Heart left ventricle (tissue), 16 donors: ENCODE measurements at regions of chr1 and their contacts with region 1.

Region 1: DNA sequence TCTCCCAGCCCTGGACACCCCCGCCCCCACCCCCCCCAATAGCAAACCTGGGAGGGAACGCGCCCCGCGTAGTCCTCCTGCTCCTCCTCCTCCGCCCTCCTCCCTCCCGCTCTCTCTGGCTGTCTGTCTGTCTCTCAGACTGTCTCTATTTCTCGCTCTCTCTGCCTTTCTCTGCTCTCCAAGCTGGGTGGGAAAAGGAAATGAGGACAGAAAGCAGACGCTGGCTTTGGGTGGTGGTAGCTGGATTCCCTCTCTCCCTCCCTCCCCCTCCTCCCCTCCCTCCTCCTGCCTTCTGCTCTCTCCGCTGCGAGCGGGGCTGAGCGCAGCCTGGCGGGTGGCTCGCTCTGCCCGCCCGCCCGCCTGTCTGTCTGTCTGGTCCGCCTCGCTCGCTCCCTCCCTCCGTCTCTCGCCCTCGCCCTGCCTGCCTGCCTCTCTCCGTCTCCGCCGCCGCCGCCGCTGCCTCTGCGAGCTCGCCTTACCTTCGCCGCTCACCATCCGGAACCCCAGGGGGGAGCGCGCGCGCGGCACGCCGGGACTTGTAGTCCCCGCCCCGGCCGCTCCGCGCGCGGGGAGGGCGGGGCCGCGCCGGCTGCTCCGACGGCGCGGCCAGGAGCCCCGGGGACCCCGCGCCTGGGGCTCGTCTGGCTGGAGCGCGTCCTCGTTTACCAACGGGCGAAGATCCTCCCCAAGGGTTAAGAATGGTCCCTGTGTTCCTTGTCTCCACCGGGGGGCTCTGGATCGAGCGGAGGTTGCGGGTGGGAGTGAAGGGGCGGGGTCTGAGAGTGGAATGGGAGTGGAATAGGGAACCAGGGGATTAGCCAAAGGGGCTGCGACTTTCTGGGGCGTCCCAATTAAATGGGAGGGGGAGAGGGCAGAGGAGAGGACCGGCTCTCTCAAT is at the start of gene AHDC1:
- DNase-seq: peak; percentile 93 to 96 (median 94)
- ATAC-seq: peak; percentile 25 to 75 (median 68)
- H3K4me3 ChIP-seq: peak within 1 kb of the TSS; percentile 82 to 100 (median 96)
- H3K27ac ChIP-seq: peak within 1 kb of the TSS; percentile 83 to 99 (median 98)
- H3K4me1 ChIP-seq: peaks cover 12 to 69% (median 44%) of the 10 kb centered on the region in 12 donors
- H3K27me3 ChIP-seq: no peaks in the 10 kb centered on the region
- CTCF ChIP-seq: peak in 5 of 12 donors; percentile 5 to 47 (median 25)
- POLR2A ChIP-seq: peak in 1 of 2 donors; percentile 92
- total RNA-seq, gene AHDC1: 29.2 to 50.2 (median 42.1) TPM

Region 2: DNA sequence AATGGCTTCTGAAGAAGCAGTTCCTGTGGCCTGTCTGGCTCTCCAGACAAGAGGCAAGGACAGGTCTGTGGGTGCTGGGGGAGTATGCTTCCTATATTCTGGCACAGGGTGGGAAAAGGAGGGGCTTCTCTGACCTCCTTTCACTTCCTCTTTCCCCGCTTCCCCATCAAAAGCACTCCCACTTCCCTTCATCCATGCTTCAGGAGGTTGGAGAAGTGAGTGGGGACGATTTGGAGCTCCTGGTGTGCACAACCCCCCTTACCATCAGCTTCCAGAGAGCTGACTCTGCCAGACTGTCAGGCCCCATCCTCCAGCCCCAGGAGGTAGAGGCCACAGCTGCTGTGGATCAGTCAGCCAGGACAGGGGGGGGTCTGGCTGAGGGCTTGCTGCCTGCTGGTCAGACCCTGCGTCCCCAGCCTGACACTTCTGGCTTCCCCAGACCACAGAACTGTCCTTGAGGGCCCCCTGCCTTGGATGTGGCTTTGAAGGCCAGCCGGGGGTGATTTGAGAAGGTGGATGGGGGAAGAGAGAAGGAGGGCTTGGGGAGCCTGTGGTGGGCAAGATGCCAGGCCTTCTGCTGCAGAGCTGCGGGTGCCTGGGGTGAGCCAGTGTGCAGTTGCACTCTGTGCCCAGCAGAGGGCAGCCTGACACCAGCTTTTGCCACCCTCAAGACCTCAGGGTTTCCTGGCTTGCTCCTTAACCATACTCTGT is 303.4 kb before region 1 on chr1:
- intact Hi-C with region 1: loop called in 9 of 10 experiments (anchors 2 to 5 kb)
- DNase-seq: peak; percentile 75 to 92 (median 83)
- ATAC-seq: peak; percentile 77 to 87 (median 85)
- H3K4me3 ChIP-seq: no peak overlapping the region
- H3K27ac ChIP-seq: peak overlapping the region; percentile 48 to 94 (median 79)
- H3K4me1 ChIP-seq: peaks cover 3 to 44% (median 31%) of the 10 kb centered on the region in 12 donors
- H3K27me3 ChIP-seq: no peaks in the 10 kb centered on the region
- CTCF ChIP-seq: peak; percentile 92 to 100 (median 98)
- POLR2A ChIP-seq: no peak

Region 3: GRCh38 chr1:27402349-27402754 is 201.6 kb before region 1 on chr1:
- intact Hi-C with region 1: loop called (anchors 2 to 10 kb)
- DNase-seq: peak; percentile 68 to 87 (median 83)
- ATAC-seq: peak; percentile 38 to 57 (median 42)
- H3K4me3 ChIP-seq: no peak overlapping the region
- H3K27ac ChIP-seq: peak overlapping the region; percentile 76 to 87 (median 85)
- H3K4me1 ChIP-seq: peaks cover 27 to 96% (median 80%) of the 10 kb centered on the region in 12 donors
- H3K27me3 ChIP-seq: no peaks in the 10 kb centered on the region
- CTCF ChIP-seq: peak; percentile 42 to 70 (median 60)
- POLR2A ChIP-seq: no peak

Region 4: GRCh38 chr1:27430903-27431600 is 172.9 kb before region 1 on chr1:
- intact Hi-C with region 1: loop called in 3 of 10 experiments (anchors 2 to 5 kb)
- DNase-seq: peak in 1 of 5 donors; percentile 44
- ATAC-seq: peak; percentile 27 to 53 (median 42)
- H3K4me3 ChIP-seq: peak overlapping the region in 7 of 12 donors; percentile 2 to 26 (median 5)
- H3K27ac ChIP-seq: peak overlapping the region; percentile 82 to 94 (median 86)
- H3K4me1 ChIP-seq: peaks cover 35 to 100% (median 93%) of the 10 kb centered on the region in 12 donors
- H3K27me3 ChIP-seq: no peaks in the 10 kb centered on the region
- CTCF ChIP-seq: peak in 5 of 12 donors; percentile 12 to 42 (median 28)
- POLR2A ChIP-seq: no peak

Region 5: GRCh38 chr1:27504588-27505419 is 99.1 kb before region 1 on chr1:
- intact Hi-C with region 1: no loop called
- DNase-seq: peak; percentile 90 to 94 (median 91)
- ATAC-seq: peak; percentile 89 to 96 (median 92)
- H3K4me3 ChIP-seq: peak overlapping the region in 6 of 12 donors; percentile 5 to 46 (median 34)
- H3K27ac ChIP-seq: peak overlapping the region; percentile 88 to 99 (median 93)
- H3K4me1 ChIP-seq: peaks cover 8 to 39% (median 25%) of the 10 kb centered on the region in 12 donors
- H3K27me3 ChIP-seq: no peaks in the 10 kb centered on the region
- CTCF ChIP-seq: peak in 1 of 12 donors; percentile 5
- POLR2A ChIP-seq: no peak

Region 6: DNA sequence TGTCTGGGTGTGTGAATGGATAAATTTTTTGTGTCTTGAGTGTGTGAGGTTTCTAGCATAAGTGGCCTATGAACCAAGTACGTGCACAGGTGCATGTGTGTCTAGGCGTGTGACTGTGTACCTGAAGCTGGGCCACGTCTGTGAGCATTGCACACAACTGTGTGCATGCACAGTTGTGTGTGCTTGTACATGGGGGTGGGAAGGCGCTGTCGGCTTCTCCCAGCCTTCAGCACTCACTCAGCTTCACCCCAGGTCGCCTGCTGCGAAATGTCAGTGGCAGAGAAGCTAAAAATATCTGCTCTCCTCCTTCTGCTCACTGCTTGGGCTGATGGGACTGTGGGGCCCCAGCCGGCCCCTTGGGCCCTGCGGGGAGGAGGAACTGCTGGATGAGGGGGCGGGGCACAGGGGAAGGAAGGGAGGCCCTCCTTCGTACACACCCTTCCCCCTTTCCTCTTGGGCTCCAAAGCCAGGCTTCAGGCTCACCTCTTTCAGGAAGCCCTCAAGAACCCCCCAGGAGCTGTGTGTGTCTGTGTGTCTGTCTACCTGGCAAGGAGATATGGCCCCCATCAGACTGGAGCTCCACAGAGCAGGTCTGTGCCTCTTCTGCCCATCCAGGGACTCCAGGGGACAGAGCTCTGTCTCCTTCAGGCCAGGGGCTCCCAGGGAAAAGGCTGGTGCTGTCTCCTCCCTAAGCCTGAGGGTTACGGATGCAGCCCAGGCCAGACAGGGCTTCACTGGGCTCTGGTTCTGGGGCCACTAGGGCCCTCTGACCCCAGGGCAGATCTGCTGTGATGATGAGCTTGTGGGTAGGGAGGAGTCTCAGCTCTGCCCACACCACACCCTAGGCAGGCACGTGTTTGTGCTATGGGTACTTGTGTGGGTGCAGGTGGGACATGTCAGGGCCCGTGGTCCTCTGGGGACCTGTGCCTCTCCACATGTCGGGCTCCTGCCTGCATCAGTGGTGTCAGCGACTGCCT is 78.3 kb before region 1 on chr1:
- intact Hi-C with region 1: loop called in 3 of 10 experiments (anchors 2 to 10 kb)
- DNase-seq: peak; percentile 90 to 94 (median 91)
- ATAC-seq: peak; percentile 73 to 80 (median 78)
- H3K4me3 ChIP-seq: peak overlapping the region in 11 of 12 donors; percentile 7 to 65 (median 49)
- H3K27ac ChIP-seq: peak overlapping the region; percentile 83 to 97 (median 92)
- H3K4me1 ChIP-seq: peaks cover 25 to 93% (median 86%) of the 10 kb centered on the region in 12 donors
- H3K27me3 ChIP-seq: no peaks in the 10 kb centered on the region
- CTCF ChIP-seq: no peak
- POLR2A ChIP-seq: peak in 1 of 2 donors; percentile 16

Region 7: DNA sequence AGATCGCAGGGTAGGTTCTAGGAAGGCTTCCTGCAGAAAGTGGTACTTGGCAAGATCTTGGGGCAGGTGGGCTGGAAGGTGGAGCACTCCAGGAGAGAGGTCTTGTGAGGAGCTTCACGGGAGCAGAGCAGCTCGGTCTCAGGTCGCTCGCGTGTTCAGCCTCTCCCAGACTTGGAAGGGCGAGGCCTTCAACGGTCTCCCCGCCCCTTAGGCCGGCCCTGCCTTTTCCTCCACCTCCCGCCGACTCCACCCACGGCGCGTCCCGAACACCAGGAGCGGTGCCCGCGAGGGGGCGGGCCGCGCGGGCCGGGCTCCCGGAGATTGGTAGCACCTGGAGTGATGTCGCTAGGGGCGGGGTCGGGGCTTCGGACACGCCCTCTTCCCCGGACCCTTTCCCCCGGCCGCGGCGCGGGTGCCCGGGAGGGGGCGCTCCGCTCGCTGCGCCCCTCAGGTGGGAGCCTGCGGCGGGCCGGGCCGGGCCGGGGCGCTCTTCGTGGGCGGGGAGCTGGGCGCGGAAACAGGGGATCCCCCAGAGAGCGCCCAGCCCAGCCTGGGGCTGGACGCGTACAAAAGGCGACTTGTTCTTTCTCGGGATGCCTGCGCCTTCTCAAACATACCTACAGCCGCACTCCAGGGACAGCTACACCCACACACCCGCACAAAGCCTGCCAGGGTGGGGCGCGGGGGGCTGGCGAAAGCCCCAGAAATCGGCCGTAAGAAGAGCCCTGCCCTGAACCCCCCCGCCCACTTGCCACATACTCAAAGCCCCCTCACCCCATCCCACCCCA is 35.4 kb before region 1 on chr1:
- intact Hi-C with region 1: loop called in 3 of 10 experiments (anchors 2 to 5 kb)
- DNase-seq: peak; percentile 95 to 97 (median 96)
- ATAC-seq: peak; percentile 71 to 86 (median 80)
- H3K4me3 ChIP-seq: peak overlapping the region in 10 of 12 donors; percentile 6 to 50 (median 42)
- H3K27ac ChIP-seq: peak overlapping the region; percentile 43 to 99 (median 94)
- H3K4me1 ChIP-seq: peaks cover 40 to 100% (median 96%) of the 10 kb centered on the region in 12 donors
- H3K27me3 ChIP-seq: no peaks in the 10 kb centered on the region
- CTCF ChIP-seq: peak; percentile 58 to 90 (median 77)
- POLR2A ChIP-seq: peak in 1 of 2 donors; percentile 59

Region 8: GRCh38 chr1:27662707-27663393 is 58.9 kb after region 1 on chr1:
- intact Hi-C with region 1: loop called (anchors 1 to 2 kb)
- DNase-seq: peak; percentile 73 to 85 (median 82)
- ATAC-seq: peak; percentile 52 to 78 (median 68)
- H3K4me3 ChIP-seq: peak overlapping the region in 1 of 12 donors; percentile 27
- H3K27ac ChIP-seq: peak overlapping the region; percentile 27 to 90 (median 72)
- H3K4me1 ChIP-seq: peaks cover 4 to 63% (median 34%) of the 10 kb centered on the region in 12 donors
- H3K27me3 ChIP-seq: no peaks in the 10 kb centered on the region
- CTCF ChIP-seq: peak; percentile 84 to 95 (median 90)
- POLR2A ChIP-seq: no peak